ENCODE measurements at regions of chrX and their contacts with region 1.

Region 1: DNA sequence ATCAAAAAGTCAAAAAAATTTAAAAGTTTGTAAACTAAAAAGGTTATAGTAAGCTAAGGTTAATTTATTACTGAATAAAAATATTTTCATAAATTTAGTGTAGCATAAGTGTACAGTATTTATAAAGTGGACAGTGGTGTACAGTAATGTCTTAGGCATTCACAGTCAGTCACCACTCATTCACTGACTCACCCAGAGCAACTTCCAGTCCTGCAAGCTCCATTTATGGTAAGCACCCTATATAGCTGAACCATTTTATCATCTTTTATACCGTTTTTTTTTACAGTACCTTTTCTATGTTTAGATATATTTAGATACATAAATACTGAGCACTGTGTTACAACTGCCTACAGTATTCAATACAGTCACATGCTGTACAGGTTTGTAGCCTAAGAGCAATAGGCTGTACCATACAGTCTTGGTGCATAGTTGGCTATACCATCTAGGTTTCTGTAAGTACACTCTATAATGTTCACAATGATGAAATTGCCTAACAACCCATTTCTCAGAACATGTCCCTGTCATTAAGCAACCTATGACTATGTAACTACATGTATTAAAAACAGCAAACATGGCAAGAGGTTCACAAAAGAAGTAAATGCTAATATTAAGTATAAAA is 18.6 kb downstream of the ACSL4 start:
- DNase-seq: no peak
- ATAC-seq: no peak
- H3K4me3 ChIP-seq: no peak overlapping the region
- H3K4me3 Mint-ChIP-seq: no peak overlapping the region
- H3K27ac ChIP-seq: no peak overlapping the region
- H3K27ac Mint-ChIP-seq: no peak overlapping the region
- H3K4me1 ChIP-seq: peaks cover 0 to 4% of the 10 kb centered on the region in 2 experiments
- H3K4me1 Mint-ChIP-seq: peaks cover 17 to 37% (median 23%) of the 10 kb centered on the region in 3 donors
- H3K27me3 ChIP-seq: no peaks in the 10 kb centered on the region
- H3K27me3 Mint-ChIP-seq: peaks cover 0 to 4% of the 10 kb centered on the region in 2 donors

Region 2: DNA sequence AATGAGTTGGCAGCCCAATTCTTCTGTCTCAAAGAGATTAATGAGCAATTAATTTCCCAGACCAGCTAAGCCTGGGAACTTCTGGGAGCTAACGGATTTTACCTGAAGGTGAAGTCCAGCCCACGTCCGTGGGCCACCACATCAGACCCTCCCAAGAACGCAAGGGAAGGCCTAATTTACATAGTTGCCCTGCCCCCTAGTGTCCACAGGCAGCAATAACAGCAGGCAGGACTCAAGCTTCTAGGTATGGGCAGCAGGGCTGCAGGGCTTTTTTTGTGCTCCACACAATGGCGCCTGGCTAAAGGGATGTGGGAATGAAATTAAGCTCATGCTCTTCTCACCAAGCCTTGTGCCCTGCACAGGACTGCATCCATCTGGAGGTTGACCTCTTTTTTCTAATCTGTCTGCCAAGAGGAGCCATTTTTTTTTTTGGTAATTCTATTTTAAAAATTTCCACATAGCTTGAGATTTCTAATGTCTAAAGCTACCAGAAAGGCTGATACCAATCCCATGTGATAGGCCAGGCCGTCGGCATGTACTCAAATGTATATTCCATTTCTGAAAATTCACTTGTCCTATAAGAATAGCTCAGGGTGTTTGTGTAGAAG is 176.6 kb after region 1 on chrX:
- CTCF ChIA-PET with region 1: interaction called, 5 to 24 read pairs
- POLR2A ChIA-PET with region 1: no interaction called
- DNase-seq: peak in 30 of 35 experiments; percentile 4 to 63 (median 26)
- ATAC-seq: peak; percentile 42 to 60 (median 45)
- H3K4me3 ChIP-seq: no peak overlapping the region
- H3K4me3 Mint-ChIP-seq: no peak overlapping the region
- H3K27ac ChIP-seq: no peak overlapping the region
- H3K27ac Mint-ChIP-seq: no peak overlapping the region
- H3K4me1 ChIP-seq: no peaks in the 10 kb centered on the region
- H3K4me1 Mint-ChIP-seq: peaks cover 0 to 8% (median 2%) of the 10 kb centered on the region in 3 donors
- H3K27me3 ChIP-seq: no peaks in the 10 kb centered on the region
- H3K27me3 Mint-ChIP-seq: peaks cover 0 to 12% of the 10 kb centered on the region in 2 donors

Region 3: GRCh38 chrX:109911046-109911445 is 196.6 kb after region 1 on chrX:
- CTCF ChIA-PET with region 1: no interaction called
- POLR2A ChIA-PET with region 1: no interaction called
- DNase-seq: no peak
- ATAC-seq: no peak
- H3K4me3 ChIP-seq: no peak overlapping the region
- H3K4me3 Mint-ChIP-seq: no peak overlapping the region
- H3K27ac ChIP-seq: no peak overlapping the region
- H3K27ac Mint-ChIP-seq: no peak overlapping the region
- H3K4me1 ChIP-seq: no peaks in the 10 kb centered on the region
- H3K4me1 Mint-ChIP-seq: no peaks in the 10 kb centered on the region
- H3K27me3 ChIP-seq: no peaks in the 10 kb centered on the region
- H3K27me3 Mint-ChIP-seq: peaks cover 7 to 27% of the 10 kb centered on the region in 2 donors